HEK293 (cell line): ENCODE measurements at regions of chr16 and their contacts with region 1.

Region 1: DNA sequence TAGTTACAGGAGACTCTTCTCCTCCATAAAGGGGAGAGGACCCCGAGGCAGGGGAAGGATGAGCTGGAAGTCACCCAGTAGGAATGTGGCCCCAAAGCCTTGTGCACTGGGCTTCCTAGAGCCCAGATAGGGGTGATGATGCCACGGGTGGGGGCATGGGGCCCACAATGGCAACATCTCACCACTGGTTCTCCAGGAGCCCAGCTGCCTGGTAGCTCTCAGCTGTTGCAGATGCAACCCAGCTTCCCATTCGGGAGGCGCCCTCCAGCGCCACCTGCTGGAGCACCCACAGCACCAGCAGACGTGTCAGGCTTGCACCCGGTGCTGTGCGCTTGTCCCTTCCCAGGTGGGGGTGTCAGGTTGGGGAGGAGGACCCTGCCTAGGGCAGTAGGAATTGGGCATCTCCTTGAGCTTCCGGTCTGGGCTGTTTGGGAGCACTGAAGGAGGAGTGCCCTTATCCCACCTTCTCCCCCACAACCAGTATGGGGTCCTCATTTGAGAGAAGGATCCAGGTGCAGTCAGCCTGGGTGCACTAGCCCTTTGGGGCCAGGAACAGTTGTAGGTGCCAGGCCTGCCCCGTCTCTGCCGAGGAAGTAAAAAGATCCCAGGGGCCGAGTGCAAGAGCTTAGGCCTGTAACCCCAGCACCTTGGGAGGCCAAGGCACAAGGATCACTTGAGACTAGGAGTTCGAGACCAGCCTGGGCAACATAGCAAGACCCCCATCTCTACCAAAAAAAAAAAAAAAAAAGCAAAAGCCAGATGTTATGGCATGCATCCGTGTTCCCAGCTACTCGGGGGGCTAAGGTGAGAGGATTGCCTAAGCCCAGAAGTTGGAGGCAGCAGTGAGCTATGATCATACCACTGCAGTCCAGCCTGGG is 14.4 kb downstream of the CDIPT start:
- H3K4me3 ChIP-seq: no peak overlapping the region
- H3K27ac ChIP-seq: no peak overlapping the region
- H3K4me1 ChIP-seq: no peaks in the 10 kb centered on the region
- CTCF ChIP-seq: peak; percentile 89

Region 2: DNA sequence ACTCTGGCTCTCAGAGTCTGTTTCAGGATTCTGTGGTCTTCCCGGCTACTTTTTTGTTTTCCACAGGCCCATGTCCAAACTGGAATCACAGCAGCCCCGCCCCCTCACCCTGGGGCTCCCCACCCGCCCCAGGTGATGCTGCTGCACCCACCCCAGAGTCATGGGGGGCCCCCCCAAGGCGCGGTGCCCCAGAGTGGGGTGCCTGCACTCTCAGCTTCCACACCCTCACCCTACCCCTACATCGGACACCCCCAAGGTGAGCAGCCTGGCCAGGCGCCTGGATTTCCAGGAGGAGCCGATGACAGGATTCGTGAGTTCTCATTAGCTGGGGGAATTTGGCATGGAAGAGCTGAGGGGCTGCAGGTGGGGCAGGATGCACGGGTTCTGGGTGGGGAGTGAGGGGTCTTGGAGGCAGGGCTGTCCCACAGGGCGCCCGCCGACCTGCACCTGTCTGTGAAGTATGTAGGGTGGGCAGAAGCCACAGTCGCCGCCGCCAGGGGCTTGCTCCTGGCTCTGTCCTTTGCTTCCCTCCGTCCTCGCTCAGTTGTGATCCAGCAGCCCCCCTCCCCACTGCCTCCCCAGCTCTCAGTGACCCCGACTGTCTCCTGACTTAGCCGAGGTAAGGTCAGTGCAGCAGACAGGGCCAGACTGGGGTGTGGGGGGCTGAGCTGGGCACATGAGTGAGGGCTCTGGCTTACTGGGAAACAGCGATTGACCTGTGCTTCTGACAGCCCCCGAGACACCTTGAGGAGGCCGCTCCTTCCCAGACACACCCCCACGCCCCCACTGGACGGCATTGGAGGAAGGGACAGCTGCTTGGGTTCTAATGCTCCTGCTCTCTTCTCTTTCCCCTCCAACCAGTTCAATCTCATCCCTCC is 1012.6 kb before region 1 on chr16:
- CTCF ChIA-PET with region 1: no interaction called
- POLR2A ChIA-PET with region 1: no interaction called
- H3K4me3 ChIP-seq: no peak overlapping the region
- H3K27ac ChIP-seq: no peak overlapping the region
- H3K4me1 ChIP-seq: no peaks in the 10 kb centered on the region
- CTCF ChIP-seq: no peak

Region 3: DNA sequence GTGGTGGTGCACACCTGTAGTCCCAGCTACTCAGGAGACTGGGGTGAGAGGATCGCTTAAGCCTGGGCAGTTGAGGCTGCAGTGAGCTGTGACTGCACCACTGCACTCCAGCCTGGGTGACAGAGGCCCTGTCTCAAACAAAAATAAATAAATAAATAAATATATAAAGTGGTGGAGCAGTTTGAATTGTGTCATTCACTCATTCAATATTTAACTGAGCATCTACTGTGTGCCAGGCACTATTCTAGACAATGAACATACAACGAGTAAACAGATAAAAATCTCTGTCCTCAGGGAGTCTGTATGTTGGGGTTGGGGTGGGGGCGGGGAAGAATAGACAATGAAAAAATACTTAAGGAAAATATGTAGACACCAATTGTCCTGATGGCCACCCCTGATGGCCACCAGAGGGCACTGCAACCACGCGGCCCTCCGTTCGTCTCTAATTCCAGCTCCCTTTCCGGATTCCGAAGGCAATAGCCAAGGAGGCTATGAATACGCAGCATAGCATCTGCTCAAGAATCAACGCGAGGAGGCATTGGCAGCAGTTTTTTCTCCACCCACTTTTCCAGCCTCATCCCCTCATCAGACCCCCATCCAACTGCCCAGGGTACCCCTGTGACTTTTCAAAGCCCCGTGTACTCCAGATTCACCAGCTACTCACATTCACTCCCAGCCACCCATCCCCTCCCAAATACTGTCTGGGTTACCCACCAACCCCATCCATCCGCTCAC is 148.2 kb before region 1 on chr16:
- CTCF ChIA-PET with region 1: interaction called, 27 read pairs
- POLR2A ChIA-PET with region 1: interaction called, 4 read pairs
- H3K4me3 ChIP-seq: no peak overlapping the region
- H3K27ac ChIP-seq: no peak overlapping the region
- H3K4me1 ChIP-seq: no peaks in the 10 kb centered on the region
- CTCF ChIP-seq: peak; percentile 75

Region 4: GRCh38 chr16:29815793-29816693 is 32.6 kb before region 1 on chr16 and contains the start of gene PAGR1:
- CTCF ChIA-PET with region 1: interaction called, 74 read pairs
- POLR2A ChIA-PET with region 1: interaction called, 13 read pairs
- H3K4me3 ChIP-seq: peak within 1 kb of the TSS; percentile 78
- H3K27ac ChIP-seq: peak within 1 kb of the TSS; percentile 96
- H3K4me1 ChIP-seq: peaks cover 19% of the 10 kb centered on the region
- CTCF ChIP-seq: no peak

Region 5: GRCh38 chr16:29831490-29831889 is 17.2 kb before region 1 on chr16:
- CTCF ChIA-PET with region 1: interaction called, 67 read pairs
- POLR2A ChIA-PET with region 1: interaction called, 3 read pairs
- H3K4me3 ChIP-seq: no peak overlapping the region
- H3K27ac ChIP-seq: no peak overlapping the region
- H3K4me1 ChIP-seq: no peaks in the 10 kb centered on the region
- CTCF ChIP-seq: no peak

Region 6: DNA sequence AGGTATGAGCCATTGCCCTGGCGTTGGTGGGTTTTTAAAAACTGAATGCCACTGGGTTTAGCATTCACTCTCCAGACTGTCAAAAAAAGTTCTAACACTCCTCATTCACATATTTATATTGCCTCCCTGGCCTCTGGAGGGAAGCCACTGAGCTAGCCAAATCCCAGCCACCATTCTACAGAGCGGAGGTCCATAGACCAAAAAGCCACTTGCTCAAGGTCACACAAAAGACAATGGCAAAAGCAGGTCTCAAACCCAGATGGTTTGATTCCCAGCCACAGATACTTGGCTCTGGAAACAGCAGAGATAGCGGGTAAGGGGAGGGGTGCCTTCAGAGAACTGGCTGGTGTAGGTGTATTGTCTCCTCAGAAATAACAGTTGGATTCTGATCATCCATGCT is 32.4 kb after region 1 on chr16:
- CTCF ChIA-PET with region 1: interaction called, 10 read pairs
- POLR2A ChIA-PET with region 1: no interaction called
- H3K4me3 ChIP-seq: no peak overlapping the region
- H3K27ac ChIP-seq: no peak overlapping the region
- H3K4me1 ChIP-seq: no peaks in the 10 kb centered on the region
- CTCF ChIP-seq: no peak

Region 7: DNA sequence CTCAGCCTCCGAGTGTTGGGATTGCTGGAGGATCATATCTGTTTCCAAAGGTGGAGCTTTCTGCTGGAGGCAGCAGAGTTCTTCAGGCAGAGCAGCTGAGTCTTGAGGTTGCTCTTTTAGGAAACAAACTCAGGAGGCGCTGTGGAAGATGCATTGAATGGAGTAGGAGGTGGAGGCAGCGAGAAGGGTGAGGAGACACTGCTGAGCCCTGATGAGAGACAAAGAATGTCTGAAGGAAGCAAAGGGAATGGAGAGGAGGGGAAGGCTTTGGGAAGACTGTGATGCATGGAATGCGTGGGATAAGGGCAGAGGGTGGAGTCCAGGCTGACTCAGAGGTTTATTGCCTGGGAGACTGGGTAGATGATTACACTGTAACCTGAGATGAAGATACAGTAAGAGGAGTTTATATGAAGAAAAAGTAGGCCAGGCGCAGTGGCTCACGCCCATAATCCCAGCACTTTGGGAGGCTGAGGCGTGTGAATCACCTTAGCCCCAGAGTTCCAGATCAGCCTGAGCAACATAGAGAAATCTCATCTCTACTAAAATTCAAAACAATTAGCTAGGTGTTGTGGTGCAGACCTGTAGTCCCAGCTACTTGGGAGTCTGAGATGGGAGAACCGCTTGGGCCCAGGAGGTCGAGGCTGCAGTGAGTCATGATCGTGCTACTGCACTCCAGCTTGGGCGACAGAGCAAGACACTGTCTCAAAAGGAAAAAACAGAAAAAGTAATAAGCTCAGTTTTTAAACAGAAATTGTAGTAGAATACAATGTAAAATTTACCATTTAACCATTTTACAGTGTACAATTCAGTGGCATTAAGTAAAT is 95.4 kb after region 1 on chr16:
- CTCF ChIA-PET with region 1: interaction called, 15 read pairs
- POLR2A ChIA-PET with region 1: no interaction called
- H3K4me3 ChIP-seq: peak overlapping the region; percentile 24
- H3K27ac ChIP-seq: peak overlapping the region; percentile 60
- H3K4me1 ChIP-seq: peaks cover 7% of the 10 kb centered on the region; the same call in 1 of the 2 replicates
- CTCF ChIP-seq: peak; percentile 87

Region 8: GRCh38 chr16:30032083-30032819 is 183.6 kb after region 1 on chr16:
- CTCF ChIA-PET with region 1: interaction called, 12 read pairs
- POLR2A ChIA-PET with region 1: no interaction called
- H3K4me3 ChIP-seq: no peak overlapping the region
- H3K27ac ChIP-seq: no peak overlapping the region
- H3K4me1 ChIP-seq: no peaks in the 10 kb centered on the region
- CTCF ChIP-seq: peak; percentile 91